Activated T-helper 1 cell treated with anti-CD3 and anti-CD28 coated beads, Interleukin-12 subunit alpha, Interleukin-12 subunit beta, Interleukin-2, Interleukin-4 antibody, amounts not matched to agents 30 ng/mL and 10 ng/mL and 1 ng/mL, durations not matched to agents 14 hours and 24 hours and 36 hours (primary cell): ENCODE measurements at regions of chr9 and their contacts with region 1.

Region 1: GRCh38 chr9:35616681-35617459 is 1.3 kb downstream of the CD72 start:
- DNase-seq: peak; percentile 57
- H3K4me3 Mint-ChIP-seq: peak overlapping the region; percentile 69
- H3K27ac Mint-ChIP-seq: peak overlapping the region; percentile 92
- H3K4me1 Mint-ChIP-seq: peaks cover 65% of the 10 kb centered on the region
- H3K27me3 Mint-ChIP-seq: peaks cover 2% of the 10 kb centered on the region

Region 2: GRCh38 chr9:35636135-35636876 is 19.4 kb after region 1 on chr9:
- intact Hi-C with region 1: loop called (anchors 1 kb)
- DNase-seq: no peak
- H3K4me3 Mint-ChIP-seq: no peak overlapping the region
- H3K27ac Mint-ChIP-seq: peak overlapping the region; percentile 80
- H3K4me1 Mint-ChIP-seq: peaks cover 60% of the 10 kb centered on the region
- H3K27me3 Mint-ChIP-seq: no peaks in the 10 kb centered on the region

Region 3: GRCh38 chr9:35657546-35658136 is 40.8 kb after region 1 on chr9 and contains the start of gene RMRP:
- intact Hi-C with region 1: loop called (anchors 1 kb)
- DNase-seq: peak; percentile 88
- H3K4me3 Mint-ChIP-seq: peak within 1 kb of the TSS; percentile 84
- H3K27ac Mint-ChIP-seq: peak within 1 kb of the TSS; percentile 99
- H3K4me1 Mint-ChIP-seq: peaks cover 59% of the 10 kb centered on the region
- H3K27me3 Mint-ChIP-seq: peaks cover 2% of the 10 kb centered on the region
- total RNA-seq, gene RMRP: 5,317 and 5,787 TPM in 2 replicates